Ovary (tissue), 10 donors: ENCODE measurements at regions of chr18 and their contacts with region 1.

Region 1: GRCh38 chr18:36595046-36595817 is 233.6 kb downstream of the TPGS2 start:
- DNase-seq: no peak
- H3K4me3 ChIP-seq: no peak overlapping the region
- H3K27ac ChIP-seq: no peak overlapping the region
- H3K4me1 ChIP-seq: no peaks in the 10 kb centered on the region
- H3K27me3 ChIP-seq: no peaks in the 10 kb centered on the region
- CTCF ChIP-seq: no peak
- EP300 ChIP-seq: no peak
- POLR2A ChIP-seq: no peak

Region 2: GRCh38 chr18:35497370-35498197 is 1097.6 kb before region 1 on chr18 and contains the start of gene INO80C:
- intact Hi-C with region 1: no loop called
- DNase-seq: peak; percentile 85 to 93 (median 90)
- H3K4me3 ChIP-seq: peak within 1 kb of the TSS; percentile 85
- H3K27ac ChIP-seq: peak within 1 kb of the TSS; percentile 86 to 90
- H3K4me1 ChIP-seq: peaks cover 4% of the 10 kb centered on the region
- H3K27me3 ChIP-seq: no peaks in the 10 kb centered on the region
- CTCF ChIP-seq: peak in 1 of 3 donors; percentile 11
- EP300 ChIP-seq: no peak
- POLR2A ChIP-seq: peak; percentile 89
- total RNA-seq, gene INO80C: 1.8 to 12.7 (median 8.1) TPM

Region 3: DNA sequence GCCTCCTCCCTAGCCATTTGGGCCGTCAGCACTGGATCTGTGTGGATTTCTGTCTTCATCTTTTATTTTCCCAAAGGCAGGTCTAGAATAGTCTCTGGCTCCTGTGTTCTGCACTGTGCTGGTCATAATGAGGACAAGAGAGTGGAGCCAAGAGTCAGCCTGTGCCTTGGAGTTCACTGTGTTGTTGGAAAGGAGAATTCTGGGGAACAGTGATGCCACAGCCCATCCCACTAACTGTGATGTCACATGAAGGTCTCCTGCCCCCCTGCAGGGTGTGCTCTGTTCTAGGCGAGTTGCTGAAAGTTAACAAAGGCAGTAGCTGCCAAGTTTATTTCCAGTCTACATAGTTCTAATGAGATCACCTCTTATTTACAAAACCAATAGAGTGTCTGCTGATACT is 15.0 kb before region 1 on chr18:
- intact Hi-C with region 1: loop called in 1 of 4 experiments (anchors 2 kb)
- DNase-seq: peak; percentile 42 to 71 (median 54)
- H3K4me3 ChIP-seq: no peak overlapping the region
- H3K27ac ChIP-seq: peak overlapping the region; percentile 49 to 79
- H3K4me1 ChIP-seq: peaks cover 9% of the 10 kb centered on the region
- H3K27me3 ChIP-seq: no peaks in the 10 kb centered on the region
- CTCF ChIP-seq: no peak
- EP300 ChIP-seq: no peak
- POLR2A ChIP-seq: no peak

Region 4: DNA sequence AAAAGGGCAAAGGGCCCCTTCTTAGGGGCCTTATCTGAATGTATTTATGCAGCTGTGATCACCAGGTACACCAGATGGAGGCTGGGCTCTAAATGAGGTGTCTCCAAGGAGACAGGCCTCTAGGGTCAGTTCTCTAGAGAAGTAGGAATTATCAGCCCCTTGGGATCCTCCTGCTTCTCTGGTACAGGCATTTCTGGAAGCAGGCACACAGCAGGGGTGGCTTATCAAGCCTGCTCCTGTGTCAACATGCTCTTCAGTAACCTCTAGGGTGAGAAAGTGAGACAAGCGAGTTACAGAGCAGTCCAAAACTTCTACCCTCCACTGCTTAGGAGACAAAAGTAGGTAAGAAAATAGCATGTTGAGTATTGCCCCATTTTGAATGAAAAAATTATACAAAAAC is 219.8 kb after region 1 on chr18:
- intact Hi-C with region 1: loop called in 1 of 4 experiments (anchors 5 kb)
- DNase-seq: no peak
- H3K4me3 ChIP-seq: no peak overlapping the region
- H3K27ac ChIP-seq: no peak overlapping the region
- H3K4me1 ChIP-seq: peaks cover 7% of the 10 kb centered on the region
- H3K27me3 ChIP-seq: no peaks in the 10 kb centered on the region
- CTCF ChIP-seq: no peak
- EP300 ChIP-seq: no peak
- POLR2A ChIP-seq: no peak